Activated T-helper 2 cell treated with anti-CD3 and anti-CD28 coated beads, Interferon-gamma antibody, Interleukin-2, Interleukin-4, amounts not matched to agents 10 μg/mL and 5 μg/mL and 100 μg/mL, durations not matched to agents 14 hours and 24 hours and 36 hours (primary cell): ENCODE measurements at regions of chr2 and their contacts with region 1.

Region 1: GRCh38 chr2:148552675-148553331 is 91.7 kb upstream of the EPC2 start:
- DNase-seq: peak; percentile 40
- H3K4me3 Mint-ChIP-seq: no peak overlapping the region
- H3K27ac Mint-ChIP-seq: no peak overlapping the region
- H3K4me1 Mint-ChIP-seq: peaks cover 5% of the 10 kb centered on the region
- H3K27me3 Mint-ChIP-seq: no peaks in the 10 kb centered on the region

Region 2: DNA sequence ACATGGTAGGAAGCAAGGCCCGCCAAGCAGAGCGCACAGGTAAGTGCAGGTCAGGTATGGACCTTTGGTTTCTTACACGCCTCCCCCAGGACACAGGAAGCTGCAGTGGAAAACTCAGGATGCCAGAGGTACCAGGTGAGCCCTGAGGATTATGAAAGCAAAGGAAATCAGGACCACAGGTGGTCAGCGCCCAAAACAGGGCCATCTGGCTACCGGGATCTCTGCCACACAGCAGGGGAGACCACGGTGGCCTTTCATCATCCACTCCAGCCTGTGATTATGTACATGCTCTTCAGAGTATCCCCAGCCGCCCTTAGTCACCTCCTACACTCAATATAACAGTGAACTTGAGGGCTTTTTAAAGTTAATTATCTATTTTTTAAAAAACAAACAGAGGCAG is 33.8 kb before region 1 on chr2:
- intact Hi-C with region 1: loop called (anchors 5 kb)
- DNase-seq: no peak
- H3K4me3 Mint-ChIP-seq: no peak overlapping the region
- H3K27ac Mint-ChIP-seq: no peak overlapping the region
- H3K4me1 Mint-ChIP-seq: peaks cover 29% of the 10 kb centered on the region
- H3K27me3 Mint-ChIP-seq: no peaks in the 10 kb centered on the region

Region 3: DNA sequence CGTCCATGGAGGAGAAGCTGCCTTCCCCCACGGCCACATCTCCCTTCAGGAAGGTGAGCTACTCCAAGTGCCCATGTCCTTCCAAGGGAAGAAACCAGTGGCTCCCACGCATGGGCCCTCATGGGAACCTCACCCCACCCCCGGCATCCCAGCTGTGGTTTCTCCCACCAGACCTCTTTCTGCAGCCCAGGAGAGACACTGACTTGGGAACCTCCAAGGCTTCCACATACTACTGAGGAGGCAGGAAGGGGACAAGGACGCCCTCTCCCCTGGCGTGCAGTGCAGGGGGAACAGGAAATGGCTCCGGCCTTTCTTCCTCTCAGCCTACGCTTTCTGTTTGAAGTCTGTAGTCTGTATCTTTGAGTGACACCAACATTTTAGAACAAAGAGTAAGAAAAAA is 12.8 kb before region 1 on chr2:
- intact Hi-C with region 1: loop called (anchors 1 kb)
- DNase-seq: no peak
- H3K4me3 Mint-ChIP-seq: peak overlapping the region; percentile 13
- H3K27ac Mint-ChIP-seq: peak overlapping the region; percentile 53
- H3K4me1 Mint-ChIP-seq: peaks cover 29% of the 10 kb centered on the region
- H3K27me3 Mint-ChIP-seq: no peaks in the 10 kb centered on the region